ENCODE measurements at regions of chr14 and their contacts with region 1.

Region 1: DNA sequence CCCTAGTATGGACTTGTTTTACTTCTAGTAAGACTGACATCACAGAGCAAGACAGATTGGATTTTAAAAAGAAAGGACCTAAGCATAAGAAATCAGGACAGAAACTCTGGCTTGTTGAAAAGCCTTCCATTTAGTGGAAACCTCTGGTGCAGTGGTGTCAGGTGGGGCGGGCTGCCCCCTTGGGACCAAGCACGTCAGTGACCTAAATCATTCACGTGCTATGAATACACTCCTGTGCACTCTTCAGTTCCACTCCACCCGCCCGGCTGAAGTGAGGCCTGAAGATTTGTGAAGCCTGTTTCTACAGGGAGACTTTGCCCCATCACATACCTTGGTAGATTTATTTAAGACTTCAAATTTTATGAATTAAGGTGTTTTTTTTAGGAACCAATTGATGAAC is 58.2 kb upstream of the STRN3 start:
- DNase-seq: no peak
- H3K4me3 ChIP-seq: no peak overlapping the region
- H3K27ac ChIP-seq: no peak overlapping the region
- H3K4me1 ChIP-seq: no peaks in the 10 kb centered on the region
- H3K27me3 ChIP-seq: no peaks in the 10 kb centered on the region
- CTCF ChIP-seq: no peak
- POLR2A ChIP-seq: no peak

Region 2: GRCh38 chr14:30982533-30982932 is 101.9 kb before region 1 on chr14:
- intact Hi-C with region 1: loop called (anchors 5 to 10 kb)
- DNase-seq: no peak
- H3K4me3 ChIP-seq: no peak overlapping the region
- H3K27ac ChIP-seq: no peak overlapping the region
- H3K4me1 ChIP-seq: peaks cover 0 to 6% of the 10 kb centered on the region in 2 donors
- H3K27me3 ChIP-seq: no peaks in the 10 kb centered on the region
- CTCF ChIP-seq: no peak
- POLR2A ChIP-seq: no peak

Region 3: DNA sequence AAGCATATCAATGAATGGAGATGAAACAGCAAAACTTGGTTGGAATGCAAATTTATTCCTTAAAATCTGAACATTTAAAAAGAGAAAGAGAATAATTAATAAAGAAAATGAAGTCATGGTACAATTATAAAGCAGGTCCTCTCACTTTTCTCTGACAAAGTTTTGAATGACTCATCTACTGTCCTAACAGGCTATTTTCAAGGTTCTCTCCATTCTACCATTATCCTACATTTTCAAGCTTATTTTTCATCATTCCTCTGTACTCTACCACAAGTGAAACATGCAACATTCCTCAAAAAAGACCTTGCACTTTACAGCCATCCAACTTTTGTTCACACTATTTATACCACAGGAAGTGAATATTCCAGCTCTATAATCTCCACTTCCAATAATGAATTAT is 95.9 kb before region 1 on chr14:
- intact Hi-C with region 1: loop called (anchors 5 to 10 kb)
- DNase-seq: no peak
- H3K4me3 ChIP-seq: no peak overlapping the region
- H3K27ac ChIP-seq: peak overlapping the region in 4 of 5 donors; percentile 53 to 68 (median 62)
- H3K4me1 ChIP-seq: peaks cover 14 to 35% of the 10 kb centered on the region in 2 donors
- H3K27me3 ChIP-seq: no peaks in the 10 kb centered on the region
- CTCF ChIP-seq: no peak
- POLR2A ChIP-seq: no peak

Region 4: DNA sequence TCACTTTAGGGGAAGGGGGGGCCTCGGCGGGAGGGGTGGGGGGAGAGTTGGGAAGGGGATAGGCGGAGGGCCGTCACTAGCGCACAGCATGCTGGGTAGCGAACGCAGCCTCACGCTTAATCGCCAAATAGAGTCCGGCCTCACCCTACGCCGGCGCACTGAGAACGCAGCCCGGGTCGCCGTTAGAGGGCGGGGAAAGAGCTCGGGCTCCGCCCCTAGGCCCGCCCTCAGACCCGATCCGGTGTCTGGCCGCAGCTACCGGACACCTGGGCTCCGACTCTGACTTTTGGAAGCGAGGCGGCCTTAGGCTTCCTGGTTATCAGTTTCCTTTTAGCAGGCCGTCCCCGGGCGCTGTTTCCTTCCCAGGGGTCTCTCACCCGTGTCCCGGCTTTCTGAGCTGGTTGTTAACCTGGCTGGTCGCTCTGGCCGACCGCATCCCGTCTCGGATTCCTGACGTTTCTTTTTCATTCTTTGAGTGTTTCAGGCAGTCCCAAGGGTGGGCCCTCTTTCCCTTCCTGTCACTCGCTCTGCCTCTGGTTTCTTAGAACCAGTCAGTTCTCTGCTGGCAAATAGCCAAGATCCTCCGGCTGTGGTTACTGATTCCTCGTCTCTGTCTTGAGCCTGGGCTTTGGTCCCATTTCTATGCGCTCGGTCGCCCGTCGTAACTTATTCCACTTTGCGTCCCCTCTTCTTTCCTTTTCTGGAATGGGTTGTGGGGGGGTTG is 57.8 kb before region 1 on chr14:
- intact Hi-C with region 1: loop called (anchors 10 kb)
- DNase-seq: peak; percentile 96 to 98 (median 97)
- H3K4me3 ChIP-seq: peak overlapping the region; percentile 9 to 99 (median 96)
- H3K27ac ChIP-seq: peak overlapping the region; percentile 94 to 100 (median 99)
- H3K4me1 ChIP-seq: peaks cover 0 to 36% of the 10 kb centered on the region in 2 donors
- H3K27me3 ChIP-seq: no peaks in the 10 kb centered on the region
- CTCF ChIP-seq: peak in 2 of 6 experiments; percentile 13 to 30
- POLR2A ChIP-seq: peak in 1 of 2 donors; percentile 93